MCF 10A (cell line): ENCODE measurements at regions of chr4 and their contacts with region 1.

Region 1: GRCh38 chr4:154618708-154619315 is 6.4 kb upstream of the FGG start:
- DNase-seq: peak; percentile 77
- H3K4me3 Mint-ChIP-seq: no peak overlapping the region
- H3K27ac Mint-ChIP-seq: no peak overlapping the region
- H3K4me1 Mint-ChIP-seq: no peaks in the 10 kb centered on the region
- H3K27me3 Mint-ChIP-seq: no peaks in the 10 kb centered on the region
- CTCF ChIP-seq: peak; percentile 76

Region 2: DNA sequence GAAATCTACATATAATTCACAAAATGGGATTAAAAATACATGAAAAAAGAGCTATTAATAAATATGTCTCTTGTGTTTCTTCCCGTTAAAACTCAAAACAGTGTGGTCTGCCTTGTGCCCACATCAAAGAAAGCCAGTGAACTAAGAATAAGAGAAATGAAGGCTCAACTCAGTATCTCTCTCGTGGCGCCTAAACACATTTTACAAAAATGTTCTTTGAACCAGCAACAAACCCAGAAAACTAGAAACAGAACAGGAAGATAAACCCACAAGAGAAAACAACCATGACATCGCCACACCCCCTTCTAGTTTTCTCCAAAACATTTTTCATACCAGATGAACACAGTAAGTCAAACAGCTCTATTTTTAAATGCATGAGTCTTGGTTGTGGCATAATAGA is 257.4 kb before region 1 on chr4:
- CTCF ChIA-PET with region 1: no interaction called
- POLR2A ChIA-PET with region 1: no interaction called
- intact Hi-C with region 1: no loop called
- DNase-seq: no peak
- H3K4me3 Mint-ChIP-seq: no peak overlapping the region
- H3K27ac Mint-ChIP-seq: no peak overlapping the region
- H3K4me1 Mint-ChIP-seq: peaks cover under 1% of the 10 kb centered on the region
- H3K27me3 Mint-ChIP-seq: no peaks in the 10 kb centered on the region
- CTCF ChIP-seq: no peak

Region 3: DNA sequence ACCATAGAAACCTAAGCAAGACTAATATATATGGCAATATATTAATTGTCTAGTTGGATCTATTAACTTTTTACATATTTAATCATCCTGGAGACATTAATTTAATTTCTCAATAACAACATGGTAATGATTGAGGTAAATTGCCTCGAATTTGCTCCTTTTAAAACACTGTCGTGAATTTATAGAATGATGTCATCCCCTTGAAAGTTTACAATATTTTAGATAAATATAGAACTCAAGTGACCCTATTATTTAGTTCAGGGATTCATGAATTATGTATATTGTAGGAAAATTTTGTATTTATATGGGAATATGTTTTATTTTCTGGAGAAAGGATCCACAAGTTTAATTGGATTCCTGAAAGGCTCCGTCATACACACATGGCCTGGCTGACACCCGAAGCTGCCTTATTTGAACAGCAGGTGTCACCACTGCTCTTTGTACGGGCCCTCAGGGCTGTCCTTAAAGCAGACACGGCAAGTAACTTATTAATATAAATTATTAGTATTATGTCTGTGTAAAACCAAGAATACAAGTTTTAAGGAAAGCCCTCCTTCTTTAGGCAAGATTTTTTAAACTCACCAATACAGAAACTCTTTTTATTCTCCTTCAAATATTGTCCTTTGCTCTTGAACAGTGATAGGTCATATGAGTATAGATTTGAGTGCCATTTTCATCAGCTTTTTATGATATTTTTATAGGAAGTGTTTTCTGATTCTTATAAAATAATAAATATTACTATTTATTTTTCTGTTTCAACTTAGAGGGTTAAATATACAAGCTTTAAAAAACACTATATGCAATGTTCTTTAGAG is 66.7 kb before region 1 on chr4:
- CTCF ChIA-PET with region 1: interaction called, 935 read pairs
- POLR2A ChIA-PET with region 1: interaction called, 29 read pairs
- intact Hi-C with region 1: loop called (anchors 1 kb)
- DNase-seq: peak; percentile 82
- H3K4me3 Mint-ChIP-seq: no peak overlapping the region
- H3K27ac Mint-ChIP-seq: no peak overlapping the region
- H3K4me1 Mint-ChIP-seq: peaks cover 13% of the 10 kb centered on the region
- H3K27me3 Mint-ChIP-seq: no peaks in the 10 kb centered on the region
- CTCF ChIP-seq: peak; percentile 80

Region 4: GRCh38 chr4:154566639-154567204 is 52.1 kb before region 1 on chr4:
- CTCF ChIA-PET with region 1: interaction called, 59 read pairs
- POLR2A ChIA-PET with region 1: interaction called, 4 read pairs
- intact Hi-C with region 1: no loop called
- DNase-seq: peak; percentile 15
- H3K4me3 Mint-ChIP-seq: no peak overlapping the region
- H3K27ac Mint-ChIP-seq: no peak overlapping the region
- H3K4me1 Mint-ChIP-seq: peaks cover 6% of the 10 kb centered on the region
- H3K27me3 Mint-ChIP-seq: no peaks in the 10 kb centered on the region
- CTCF ChIP-seq: no peak

Region 5: DNA sequence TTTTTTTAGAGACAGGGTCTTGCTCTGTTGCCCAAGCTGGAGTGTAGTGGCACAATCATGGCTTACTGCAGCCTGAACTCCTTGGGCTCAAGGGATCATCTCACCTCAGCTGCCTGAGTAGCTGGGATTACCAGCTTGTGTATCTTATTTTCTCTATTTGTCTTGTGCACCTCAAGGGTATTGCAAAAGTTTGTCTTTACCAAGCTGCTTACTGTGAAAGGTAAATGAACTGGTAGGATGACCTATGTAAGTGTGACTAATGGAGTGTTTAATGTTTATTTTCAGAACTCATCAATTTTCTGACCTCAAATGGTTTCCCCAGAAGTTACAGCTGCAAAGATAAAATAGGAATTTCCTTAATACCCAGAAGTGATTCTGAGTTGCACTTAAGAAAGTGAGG is 23.0 kb before region 1 on chr4:
- CTCF ChIA-PET with region 1: interaction called, 53 read pairs
- POLR2A ChIA-PET with region 1: no interaction called
- intact Hi-C with region 1: no loop called
- DNase-seq: peak; percentile 35
- H3K4me3 Mint-ChIP-seq: no peak overlapping the region
- H3K27ac Mint-ChIP-seq: no peak overlapping the region
- H3K4me1 Mint-ChIP-seq: peaks cover 5% of the 10 kb centered on the region
- H3K27me3 Mint-ChIP-seq: no peaks in the 10 kb centered on the region
- CTCF ChIP-seq: no peak

Region 6: DNA sequence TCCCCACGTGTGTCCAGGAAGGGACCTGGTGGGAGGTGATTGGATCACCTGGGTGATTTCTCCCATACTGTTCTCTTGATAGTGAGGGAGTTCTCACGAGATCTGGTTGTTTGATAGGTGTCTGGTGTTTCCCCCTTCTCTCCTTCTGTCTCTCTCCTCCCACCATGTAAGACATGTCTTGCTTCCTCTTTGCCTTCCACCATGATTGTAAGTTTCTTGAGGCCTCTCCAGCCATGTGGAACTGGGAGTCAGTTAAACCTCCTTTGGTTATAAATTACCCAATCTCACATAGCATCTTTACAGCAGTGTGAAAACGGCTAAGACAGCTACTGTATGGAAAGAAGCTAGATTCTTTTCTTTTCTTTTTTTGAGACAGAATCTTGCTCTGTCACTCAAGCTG is 15.2 kb after region 1 on chr4:
- CTCF ChIA-PET with region 1: interaction called, 116 read pairs
- POLR2A ChIA-PET with region 1: interaction called, 3 read pairs
- intact Hi-C with region 1: no loop called
- DNase-seq: no peak
- H3K4me3 Mint-ChIP-seq: no peak overlapping the region
- H3K27ac Mint-ChIP-seq: no peak overlapping the region
- H3K4me1 Mint-ChIP-seq: no peaks in the 10 kb centered on the region
- H3K27me3 Mint-ChIP-seq: no peaks in the 10 kb centered on the region
- CTCF ChIP-seq: no peak